Head of caudate nucleus (tissue), 42 donors: ENCODE measurements at regions of chr3 and their contacts with region 1.

Region 1: DNA sequence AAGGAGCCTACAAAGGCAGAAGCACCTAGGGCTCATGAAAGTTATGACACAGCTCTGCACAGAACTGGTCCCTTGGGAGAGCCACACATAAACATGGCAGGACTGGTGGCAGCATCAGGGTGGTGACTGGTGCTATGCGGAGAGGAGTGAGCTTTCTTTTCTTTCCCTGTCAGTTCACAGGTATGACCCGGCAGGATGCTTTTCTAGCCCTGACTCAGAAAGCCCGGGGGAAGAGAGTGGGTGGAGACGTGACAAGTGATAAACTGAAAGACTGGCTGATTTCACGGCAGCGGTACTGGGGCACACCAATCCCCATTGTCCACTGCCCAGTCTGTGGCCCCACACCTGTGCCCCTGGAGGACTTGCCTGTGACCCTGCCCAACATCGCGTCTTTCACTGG is 103.0 kb downstream of the LARS2 start:
- DNase-seq: peak in 38 of 42 donors; percentile 22 to 88 (median 56)

Region 2: GRCh38 chr3:45224824-45225464 is 266.4 kb before region 1 on chr3:
- intact Hi-C with region 1: loop called (anchors 5 kb)
- DNase-seq: peak; percentile 66 to 91 (median 80)